Activated B cell treated with CpG ODN at 0.5 μM for 24 hours (primary cell): ENCODE measurements at regions of chr7 and their contacts with region 1.

Region 1: GRCh38 chr7:106153891-106154449 is 41.9 kb upstream of the SYPL1 start:
- DNase-seq: peak; percentile 64
- ATAC-seq: peak; percentile 89
- H3K4me3 Mint-ChIP-seq: peak overlapping the region; percentile 72
- H3K27ac Mint-ChIP-seq: peak overlapping the region; percentile 19
- H3K4me1 Mint-ChIP-seq: peaks cover 52% of the 10 kb centered on the region
- H3K27me3 Mint-ChIP-seq: no peaks in the 10 kb centered on the region
- CTCF ChIP-seq: peak; percentile 66

Region 2: DNA sequence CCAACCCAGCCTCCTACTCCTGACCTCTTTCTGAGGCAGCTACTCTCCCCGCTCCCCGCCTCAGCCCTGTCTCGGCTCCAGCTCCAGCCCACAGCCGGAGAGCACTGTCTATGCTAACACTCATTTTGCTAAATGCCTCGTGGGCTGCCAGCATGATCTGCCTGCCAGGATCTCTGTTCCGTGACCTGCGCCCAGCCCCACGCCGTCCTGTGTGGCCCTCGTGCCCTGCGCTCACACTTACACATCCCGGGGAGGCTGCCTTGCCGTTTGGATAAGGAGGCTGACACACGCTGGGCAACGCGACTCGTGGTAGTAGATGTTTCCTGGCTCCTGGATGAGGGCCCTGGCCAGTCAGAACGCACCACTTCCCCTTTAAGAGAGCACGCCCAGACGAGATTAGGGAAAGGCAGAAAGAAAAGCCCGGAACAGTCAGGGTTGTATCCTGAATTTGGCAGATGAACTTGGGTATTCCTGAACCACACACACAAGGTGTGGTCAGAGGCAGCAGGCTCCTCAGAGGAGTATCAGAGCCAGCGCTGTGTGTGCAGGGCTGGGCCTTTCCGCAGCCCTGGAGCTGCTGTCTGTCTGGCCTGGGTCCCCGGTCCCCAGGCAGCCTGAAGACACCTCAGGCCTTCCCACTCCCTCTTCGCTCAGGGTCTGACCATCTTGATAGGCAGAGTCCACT is 475.0 kb before region 1 on chr7:
- CTCF ChIA-PET with region 1: no interaction called
- POLR2A ChIA-PET with region 1: no interaction called
- intact Hi-C with region 1: loop called (anchors 5 kb)
- DNase-seq: peak; percentile 42
- ATAC-seq: peak; percentile 62
- H3K4me3 Mint-ChIP-seq: peak overlapping the region; percentile 94
- H3K27ac Mint-ChIP-seq: peak overlapping the region; percentile 89
- H3K4me1 Mint-ChIP-seq: peaks cover 57% of the 10 kb centered on the region
- H3K27me3 Mint-ChIP-seq: no peaks in the 10 kb centered on the region
- CTCF ChIP-seq: no peak

Region 3: DNA sequence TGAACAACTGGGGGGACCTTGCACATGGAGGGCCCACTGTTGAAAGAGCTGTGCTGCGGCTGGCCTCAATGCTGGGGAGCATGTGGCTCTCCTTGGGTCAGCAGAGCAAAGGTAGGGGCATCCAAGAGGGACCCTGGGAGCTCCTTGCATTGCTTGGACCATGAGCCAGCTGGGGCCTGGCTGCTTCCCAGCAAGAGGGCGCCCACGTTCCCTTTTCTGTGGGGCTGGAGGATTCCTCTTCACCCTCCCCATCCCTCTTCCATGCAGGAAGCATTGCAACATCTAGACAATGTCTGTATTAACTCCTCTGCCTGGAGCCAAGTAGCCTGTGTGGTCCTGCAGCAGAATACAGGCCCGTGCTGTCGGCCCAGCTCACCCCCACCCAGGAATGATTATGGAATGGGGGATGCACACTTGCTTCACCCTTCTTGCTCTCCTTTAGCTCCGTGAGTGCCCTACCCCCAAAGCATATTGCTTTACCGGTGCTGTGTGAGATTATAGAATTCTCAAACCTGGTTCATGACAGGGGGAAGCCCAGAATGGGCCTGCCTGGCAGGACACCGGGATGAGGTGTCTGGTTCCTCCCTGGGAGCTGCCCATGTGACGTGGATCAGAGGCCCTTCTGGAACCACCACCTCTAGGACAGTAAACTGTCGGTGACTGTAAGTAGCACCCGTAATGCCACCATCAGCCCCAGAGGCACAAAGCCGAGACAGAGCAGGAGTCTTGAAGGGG is 103.8 kb before region 1 on chr7:
- CTCF ChIA-PET with region 1: interaction called, 247 read pairs
- POLR2A ChIA-PET with region 1: interaction called, 7 read pairs
- intact Hi-C with region 1: no loop called
- DNase-seq: no peak
- ATAC-seq: no peak
- H3K4me3 Mint-ChIP-seq: no peak overlapping the region
- H3K27ac Mint-ChIP-seq: no peak overlapping the region
- H3K4me1 Mint-ChIP-seq: peaks cover 35% of the 10 kb centered on the region
- H3K27me3 Mint-ChIP-seq: no peaks in the 10 kb centered on the region
- CTCF ChIP-seq: no peak

Region 4: GRCh38 chr7:106089647-106090046 is 64.3 kb before region 1 on chr7:
- CTCF ChIA-PET with region 1: interaction called, 17 read pairs
- POLR2A ChIA-PET with region 1: interaction called, 3 read pairs
- intact Hi-C with region 1: no loop called
- DNase-seq: no peak
- ATAC-seq: peak; percentile 88
- H3K4me3 Mint-ChIP-seq: peak overlapping the region; percentile 65
- H3K27ac Mint-ChIP-seq: peak overlapping the region; percentile 83
- H3K4me1 Mint-ChIP-seq: peaks cover 82% of the 10 kb centered on the region
- H3K27me3 Mint-ChIP-seq: no peaks in the 10 kb centered on the region
- CTCF ChIP-seq: no peak

Region 5: DNA sequence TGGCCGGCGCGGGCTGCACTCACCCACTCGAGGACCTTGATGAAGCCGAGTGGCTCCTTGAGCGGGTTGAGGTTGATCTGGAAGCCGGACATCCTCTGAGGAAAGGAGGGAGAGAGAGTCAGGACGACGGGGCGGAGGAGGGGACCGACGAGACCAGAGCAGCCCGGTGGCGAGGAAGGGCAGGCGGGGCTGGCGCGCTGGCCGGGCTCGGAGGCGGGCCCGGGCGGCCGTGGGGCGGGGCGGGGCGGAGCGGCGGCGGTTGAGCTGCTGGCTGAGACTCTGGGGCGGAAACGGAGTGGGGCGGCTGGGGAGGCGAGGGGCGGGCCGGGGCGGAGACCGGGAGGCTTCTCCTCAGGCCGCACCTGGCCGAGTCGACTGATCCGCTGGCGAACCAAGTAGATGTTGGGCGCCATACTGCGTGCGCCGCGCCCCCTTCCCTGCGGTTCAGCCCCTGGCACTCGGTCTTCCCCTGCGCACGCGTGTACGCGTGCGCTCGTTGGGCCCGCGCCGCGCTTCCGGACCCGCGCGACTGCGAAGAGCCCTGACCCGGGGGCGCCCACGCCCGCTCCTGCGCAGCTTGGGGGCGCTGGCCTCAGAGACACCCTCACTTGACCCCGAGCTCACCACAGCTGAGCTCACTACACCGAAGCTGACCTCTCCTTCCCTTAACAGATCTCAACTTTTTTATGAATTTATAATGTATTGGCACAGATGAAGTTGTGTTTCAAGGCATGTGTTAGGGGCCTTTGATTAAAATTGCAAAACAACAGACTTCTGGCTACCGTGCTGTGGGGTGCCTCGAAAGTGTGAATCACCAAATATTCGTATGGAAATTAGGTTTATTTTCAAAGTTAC is 41.6 kb before region 1 on chr7 and contains the start of gene SYPL1:
- CTCF ChIA-PET with region 1: interaction called, 59 read pairs
- POLR2A ChIA-PET with region 1: interaction called, 20 read pairs
- intact Hi-C with region 1: loop called (anchors 1 kb)
- DNase-seq: peak; percentile 94
- ATAC-seq: peak; percentile 76
- H3K4me3 Mint-ChIP-seq: peak within 1 kb of the TSS; percentile 94
- H3K27ac Mint-ChIP-seq: peak within 1 kb of the TSS; percentile 97
- H3K4me1 Mint-ChIP-seq: peaks cover 80% of the 10 kb centered on the region
- H3K27me3 Mint-ChIP-seq: no peaks in the 10 kb centered on the region
- CTCF ChIP-seq: no peak
- total RNA-seq, gene SYPL1: 109 and 116 TPM in 2 replicates

Region 6: GRCh38 chr7:106176414-106177299 is 22.7 kb after region 1 on chr7:
- CTCF ChIA-PET with region 1: no interaction called
- POLR2A ChIA-PET with region 1: no interaction called
- intact Hi-C with region 1: no loop called
- DNase-seq: peak; percentile 64
- ATAC-seq: peak; percentile 91
- H3K4me3 Mint-ChIP-seq: no peak overlapping the region
- H3K27ac Mint-ChIP-seq: no peak overlapping the region
- H3K4me1 Mint-ChIP-seq: peaks cover 11% of the 10 kb centered on the region
- H3K27me3 Mint-ChIP-seq: peaks cover 4% of the 10 kb centered on the region
- CTCF ChIP-seq: peak; percentile 41